ENCODE measurements at regions of chr2 and their contacts with region 1.

Region 1: GRCh38 chr2:225122583-225123486 is 80.6 kb upstream of the DOCK10 start:
- DNase-seq: no peak
- H3K4me3 ChIP-seq: no peak overlapping the region
- H3K27ac ChIP-seq: no peak overlapping the region
- H3K4me1 ChIP-seq: no peaks in the 10 kb centered on the region
- H3K27me3 ChIP-seq: no peaks in the 10 kb centered on the region
- CTCF ChIP-seq: peak in 3 of 4 experiments; percentile 26 to 48 (median 40)
- POLR2A ChIP-seq: no peak

Region 2: GRCh38 chr2:225660262-225661131 is 537.7 kb after region 1 on chr2:
- intact Hi-C with region 1: loop called (anchors 5 kb)
- DNase-seq: peak; percentile 58
- H3K4me3 ChIP-seq: no peak overlapping the region
- H3K27ac ChIP-seq: no peak overlapping the region
- H3K4me1 ChIP-seq: no peaks in the 10 kb centered on the region
- H3K27me3 ChIP-seq: no peaks in the 10 kb centered on the region
- CTCF ChIP-seq: peak; percentile 48 to 77 (median 66)
- POLR2A ChIP-seq: no peak

Region 3: GRCh38 chr2:225735844-225736243 is 613.0 kb after region 1 on chr2:
- intact Hi-C with region 1: no loop called
- DNase-seq: no peak
- H3K4me3 ChIP-seq: no peak overlapping the region
- H3K27ac ChIP-seq: no peak overlapping the region
- H3K4me1 ChIP-seq: no peaks in the 10 kb centered on the region
- H3K27me3 ChIP-seq: no peaks in the 10 kb centered on the region
- CTCF ChIP-seq: no peak
- POLR2A ChIP-seq: no peak

Region 4: GRCh38 chr2:225971433-225971832 is 848.6 kb after region 1 on chr2:
- intact Hi-C with region 1: no loop called
- DNase-seq: no peak
- H3K4me3 ChIP-seq: no peak overlapping the region
- H3K27ac ChIP-seq: no peak overlapping the region
- H3K4me1 ChIP-seq: no peaks in the 10 kb centered on the region
- H3K27me3 ChIP-seq: no peaks in the 10 kb centered on the region
- CTCF ChIP-seq: no peak
- POLR2A ChIP-seq: no peak